Colonic mucosa (tissue), 4 donors: ENCODE measurements at regions of chr19 and their contacts with region 1.

Region 1: DNA sequence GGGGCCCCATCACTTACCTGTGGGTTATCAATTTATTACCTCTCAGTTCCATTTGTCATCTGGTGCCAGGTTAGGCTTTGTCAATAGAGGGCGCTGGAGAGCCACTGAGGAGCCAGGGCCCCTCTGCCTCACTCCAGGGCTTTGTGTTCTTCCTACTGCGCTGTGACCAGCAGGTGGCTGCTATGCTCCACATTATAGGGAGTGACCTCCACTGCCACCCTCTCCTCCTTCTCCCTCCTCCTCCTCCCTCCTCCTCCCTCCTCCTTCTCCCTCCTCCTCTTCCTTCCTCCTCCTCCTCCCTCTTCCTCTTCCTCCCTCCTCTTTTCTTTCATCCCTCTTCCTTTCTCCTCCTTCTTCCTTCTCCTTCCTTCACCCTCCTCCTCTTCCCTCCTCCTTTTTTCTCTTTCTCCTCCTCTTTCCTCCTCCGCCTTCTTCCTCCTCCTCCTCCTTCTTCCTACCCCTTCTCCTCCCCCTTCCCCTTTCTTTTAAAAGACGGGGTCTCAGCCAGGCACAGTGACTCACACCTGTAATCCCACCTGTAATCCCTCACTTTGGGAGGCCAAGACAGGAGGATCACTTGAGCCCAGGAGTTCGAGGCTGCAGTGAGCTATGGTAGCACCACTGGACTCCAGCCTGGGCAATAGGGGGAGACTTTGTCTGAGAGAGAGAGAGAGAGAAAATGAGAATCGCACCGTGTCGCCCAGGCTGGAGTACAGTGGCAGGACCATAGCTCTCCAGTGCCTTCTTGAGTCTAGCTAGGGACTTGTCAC is 10.3 kb upstream of the ZBTB32 start:
- DNase-seq: peak; percentile 93
- H3K4me3 ChIP-seq: no peak overlapping the region
- H3K27ac ChIP-seq: no peak overlapping the region
- H3K4me1 ChIP-seq: no peaks in the 10 kb centered on the region
- H3K27me3 ChIP-seq: no peaks in the 10 kb centered on the region
- CTCF ChIP-seq: peak; percentile 91

Region 2: DNA sequence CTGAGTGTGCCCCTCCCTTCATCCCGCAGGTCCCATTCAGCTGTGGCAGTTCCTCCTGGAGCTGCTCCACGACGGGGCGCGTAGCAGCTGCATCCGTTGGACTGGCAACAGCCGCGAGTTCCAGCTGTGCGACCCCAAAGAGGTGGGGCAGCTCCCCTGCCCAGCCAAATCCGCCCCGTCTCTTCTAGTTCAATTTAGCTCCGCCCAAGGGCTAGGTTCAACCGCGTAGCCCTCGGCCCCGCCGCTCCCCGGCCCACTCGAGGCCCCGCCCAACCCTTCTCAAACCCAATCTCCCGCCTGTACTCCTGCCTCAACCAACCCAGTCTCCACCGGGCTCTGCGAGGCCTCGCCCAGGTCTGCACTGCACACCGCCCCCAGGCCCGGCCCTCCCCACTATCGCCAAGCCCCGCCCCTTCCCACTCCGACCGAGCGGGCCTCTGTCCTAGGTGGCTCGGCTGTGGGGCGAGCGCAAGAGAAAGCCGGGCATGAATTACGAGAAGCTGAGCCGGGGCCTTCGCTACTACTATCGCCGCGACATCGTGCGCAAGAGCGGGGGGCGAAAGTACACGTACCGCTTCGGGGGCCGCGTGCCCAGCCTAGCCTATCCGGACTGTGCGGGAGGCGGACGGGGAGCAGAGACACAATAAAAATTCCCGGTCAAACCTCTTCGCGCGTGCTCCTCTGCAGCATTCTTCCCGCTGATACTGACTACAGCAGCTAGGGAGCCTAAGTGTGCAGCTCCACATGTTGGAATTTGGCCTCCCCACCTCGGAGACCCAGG is 49.6 kb before region 1 on chr19:
- intact Hi-C with region 1: no loop called
- DNase-seq: peak; percentile 98
- H3K4me3 ChIP-seq: peak overlapping the region; percentile 55
- H3K27ac ChIP-seq: peak overlapping the region; percentile 96
- H3K4me1 ChIP-seq: peaks cover 5% of the 10 kb centered on the region
- H3K27me3 ChIP-seq: no peaks in the 10 kb centered on the region
- CTCF ChIP-seq: no peak

Region 3: DNA sequence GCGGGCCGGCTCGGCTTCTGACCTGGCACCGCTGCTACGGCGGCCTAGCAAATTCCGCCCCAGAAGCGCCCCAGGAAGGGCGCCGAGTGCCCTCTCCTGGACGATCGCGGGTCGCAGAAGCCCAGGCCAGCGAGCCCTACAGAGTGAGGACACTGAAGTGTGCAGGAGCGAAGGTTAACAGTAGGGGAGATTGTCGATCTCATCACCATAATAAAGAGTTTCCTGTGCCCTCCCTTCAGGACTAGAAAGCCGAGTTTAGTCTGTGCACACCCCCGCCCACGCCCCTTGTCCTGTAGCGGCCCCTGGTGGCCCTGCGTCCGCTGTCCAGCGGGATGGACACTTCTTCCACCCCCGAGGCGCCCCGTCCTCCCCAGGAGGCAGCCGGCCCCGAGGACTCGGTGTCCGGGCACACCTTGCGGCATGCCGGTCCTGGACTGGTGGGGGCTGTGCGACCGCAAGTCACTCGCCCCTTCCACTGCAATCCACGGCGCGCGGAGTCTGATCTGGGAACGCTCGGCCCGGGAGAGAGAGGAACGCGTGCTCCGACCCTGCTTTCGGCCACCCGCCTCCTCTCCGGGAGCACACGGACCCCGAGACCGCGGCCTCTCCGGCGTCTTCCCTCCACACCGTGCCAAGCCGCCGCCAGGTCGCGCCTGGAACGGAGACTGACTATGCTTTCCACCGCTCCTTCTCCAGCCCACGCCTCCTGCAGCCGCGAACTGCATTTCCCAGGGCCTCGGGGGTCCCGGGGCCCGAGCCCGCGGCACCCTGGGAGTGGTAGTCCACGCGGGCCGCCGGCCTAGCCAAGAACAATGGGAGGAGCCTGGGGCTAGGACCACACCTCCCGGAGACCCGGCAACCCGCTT is 23.0 kb after region 1 on chr19:
- intact Hi-C with region 1: loop called (anchors 2 kb)
- DNase-seq: peak; percentile 94
- H3K4me3 ChIP-seq: peak overlapping the region; percentile 77
- H3K27ac ChIP-seq: peak overlapping the region; percentile 96
- H3K4me1 ChIP-seq: peaks cover 18% of the 10 kb centered on the region
- H3K27me3 ChIP-seq: no peaks in the 10 kb centered on the region
- CTCF ChIP-seq: peak; percentile 91

Region 4: GRCh38 chr19:35879770-35880317 is 185.8 kb after region 1 on chr19:
- intact Hi-C with region 1: loop called (anchors 2 kb)
- DNase-seq: peak; percentile 93
- H3K4me3 ChIP-seq: no peak overlapping the region
- H3K27ac ChIP-seq: no peak overlapping the region
- H3K4me1 ChIP-seq: no peaks in the 10 kb centered on the region
- H3K27me3 ChIP-seq: no peaks in the 10 kb centered on the region
- CTCF ChIP-seq: no peak